ENCODE measurements at regions of chr10 and their contacts with region 1.

Region 1: GRCh38 chr10:12214763-12215218 is 18.8 kb downstream of the CDC123 start:
- DNase-seq: peak; percentile 45
- H3K4me3 ChIP-seq: no peak overlapping the region
- H3K27ac ChIP-seq: peak overlapping the region in 1 of 2 donors; percentile 21
- H3K4me1 ChIP-seq: no peaks in the 10 kb centered on the region
- H3K27me3 ChIP-seq: no peaks in the 10 kb centered on the region
- CTCF ChIP-seq: peak in 3 of 4 experiments; percentile 55 to 71 (median 67)
- POLR2A ChIP-seq: no peak

Region 2: DNA sequence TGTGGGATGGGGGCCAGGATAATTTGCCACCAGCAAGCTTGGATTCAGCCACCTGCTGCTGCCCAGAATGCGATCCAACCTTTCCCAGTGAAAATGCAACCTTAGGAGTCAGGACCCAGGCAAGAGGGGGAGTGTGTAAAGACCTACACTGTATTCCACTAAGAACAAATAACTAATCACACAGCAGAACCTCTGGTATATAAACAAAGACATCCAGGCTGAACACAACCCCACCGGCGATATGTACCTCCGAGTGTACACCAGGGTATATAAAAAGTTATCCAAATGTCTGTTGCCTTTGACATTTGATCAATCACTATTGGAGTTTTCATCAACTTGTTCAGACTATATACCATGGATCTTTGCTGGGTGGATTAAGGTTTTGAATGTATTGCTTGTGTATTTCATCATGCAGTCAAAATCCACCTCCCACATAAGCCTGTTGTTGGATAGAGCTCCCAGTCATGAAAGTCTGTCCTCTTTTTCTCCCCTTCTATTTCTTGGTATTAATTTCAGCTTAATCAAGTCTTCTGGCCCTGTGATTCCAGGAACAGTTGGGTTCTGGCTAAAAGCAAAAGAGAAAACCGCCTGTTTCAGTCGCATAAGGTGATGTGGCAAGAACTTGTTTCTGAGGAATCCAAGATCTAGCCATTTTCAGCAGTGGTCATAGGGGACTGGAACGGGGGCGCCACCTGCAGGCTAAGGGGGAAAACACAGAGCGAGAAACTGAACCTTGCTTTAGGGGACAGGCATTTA is 496.0 kb after region 1 on chr10:
- intact Hi-C with region 1: loop called (anchors 5 kb)
- DNase-seq: peak; percentile 66
- H3K4me3 ChIP-seq: no peak overlapping the region
- H3K27ac ChIP-seq: peak overlapping the region in 1 of 2 donors; percentile 7
- H3K4me1 ChIP-seq: no peaks in the 10 kb centered on the region
- H3K27me3 ChIP-seq: no peaks in the 10 kb centered on the region
- CTCF ChIP-seq: peak; percentile 68 to 85 (median 82)
- POLR2A ChIP-seq: no peak